Breast epithelium (tissue), 4 donors: ENCODE measurements at regions of chr4 and their contacts with region 1.

Region 1: DNA sequence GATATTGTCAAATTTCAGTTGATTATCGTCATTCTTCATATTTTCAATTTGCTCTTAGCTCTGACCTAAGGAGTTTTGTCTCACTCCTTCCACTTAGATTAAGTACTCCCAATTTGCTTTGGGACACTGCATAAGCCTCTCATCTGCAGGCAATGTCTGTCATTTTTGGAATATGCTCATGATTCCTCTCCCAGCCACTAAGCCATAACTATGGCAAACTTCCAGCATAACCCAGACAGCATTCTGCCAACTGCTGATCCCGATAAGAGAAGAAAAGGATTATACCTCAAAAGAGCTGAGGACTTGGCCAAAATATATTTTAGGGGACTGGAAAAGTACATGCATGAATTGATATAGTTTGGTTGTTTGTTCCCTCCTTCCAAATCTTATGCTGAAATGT is 444.4 kb downstream of the GABRG1 start:
- DNase-seq: no peak
- H3K4me3 ChIP-seq: no peak overlapping the region
- H3K27ac ChIP-seq: no peak overlapping the region
- H3K4me1 ChIP-seq: no peaks in the 10 kb centered on the region
- H3K27me3 ChIP-seq: no peaks in the 10 kb centered on the region
- CTCF ChIP-seq: no peak
- POLR2A ChIP-seq: no peak

Region 2: GRCh38 chr4:45004847-45005565 is 674.4 kb before region 1 on chr4:
- intact Hi-C with region 1: loop called (anchors 5 kb)
- DNase-seq: no peak
- H3K4me3 ChIP-seq: no peak overlapping the region
- H3K27ac ChIP-seq: no peak overlapping the region
- H3K4me1 ChIP-seq: no peaks in the 10 kb centered on the region
- H3K27me3 ChIP-seq: no peaks in the 10 kb centered on the region
- CTCF ChIP-seq: no peak
- POLR2A ChIP-seq: no peak

Region 3: GRCh38 chr4:45693746-45694145 is 14.3 kb after region 1 on chr4:
- intact Hi-C with region 1: no loop called
- DNase-seq: no peak
- H3K4me3 ChIP-seq: no peak overlapping the region
- H3K27ac ChIP-seq: no peak overlapping the region
- H3K4me1 ChIP-seq: no peaks in the 10 kb centered on the region
- H3K27me3 ChIP-seq: no peaks in the 10 kb centered on the region
- CTCF ChIP-seq: no peak
- POLR2A ChIP-seq: no peak